K562 (cell line): ENCODE measurements at regions of chr6 and their contacts with region 1.

Region 1: GRCh38 chr6:43506667-43507471 is 3.3 kb downstream of the LRRC73 start:
- DNase-seq: peak; percentile 82 to 94 (median 84)
- ATAC-seq: peak; percentile 87
- H3K4me3 ChIP-seq: no peak overlapping the region
- H3K27ac ChIP-seq: no peak overlapping the region
- H3K4me1 ChIP-seq: peaks cover 10 to 45% of the 10 kb centered on the region in 2 experiments; a peak in 4 of 5 replicates
- H3K27me3 ChIP-seq: peaks cover 0 to 6% of the 10 kb centered on the region in 2 experiments; a peak in 2 of 5 replicates
- CTCF ChIP-seq: peak; percentile 98
- EP300 ChIP-seq: no peak
- POLR2A ChIP-seq: no peak; the same call in 1 of the 2 replicates
- RAD21 ChIP-seq: peak; percentile 85 to 91

Region 2: GRCh38 chr6:42911171-42912021 is 595.5 kb before region 1 on chr6:
- CTCF ChIA-PET with region 1: no interaction called
- POLR2A ChIA-PET with region 1: no interaction called
- in situ Hi-C with region 1: loop called (anchors 5 kb)
- intact Hi-C with region 1: no loop called
- DNase-seq: no peak
- ATAC-seq: no peak
- H3K4me3 ChIP-seq: no peak overlapping the region
- H3K27ac ChIP-seq: no peak overlapping the region
- H3K4me1 ChIP-seq: peaks cover 5 to 13% of the 10 kb centered on the region in 2 experiments; a peak in 4 of 5 replicates
- H3K27me3 ChIP-seq: no peaks in the 10 kb centered on the region
- CTCF ChIP-seq: no peak
- EP300 ChIP-seq: no peak
- POLR2A ChIP-seq: no peak
- RAD21 ChIP-seq: no peak

Region 3: GRCh38 chr6:43263314-43264178 is 243.3 kb before region 1 on chr6:
- CTCF ChIA-PET with region 1: interaction called, 4 read pairs
- POLR2A ChIA-PET with region 1: interaction called, 7 read pairs
- in situ Hi-C with region 1: no loop called
- intact Hi-C with region 1: loop called (anchors 1 kb)
- DNase-seq: peak; percentile 79 to 89 (median 83)
- ATAC-seq: peak; percentile 94
- H3K4me3 ChIP-seq: no peak overlapping the region
- H3K27ac ChIP-seq: no peak overlapping the region
- H3K4me1 ChIP-seq: peaks cover 16 to 40% of the 10 kb centered on the region in 2 experiments
- H3K27me3 ChIP-seq: peaks cover 5 to 15% of the 10 kb centered on the region in 2 experiments; a peak in 3 of 5 replicates
- CTCF ChIP-seq: peak; percentile 94 to 98 (median 96)
- EP300 ChIP-seq: no peak
- POLR2A ChIP-seq: no peak
- RAD21 ChIP-seq: peak; percentile 94 to 97

Region 4: DNA sequence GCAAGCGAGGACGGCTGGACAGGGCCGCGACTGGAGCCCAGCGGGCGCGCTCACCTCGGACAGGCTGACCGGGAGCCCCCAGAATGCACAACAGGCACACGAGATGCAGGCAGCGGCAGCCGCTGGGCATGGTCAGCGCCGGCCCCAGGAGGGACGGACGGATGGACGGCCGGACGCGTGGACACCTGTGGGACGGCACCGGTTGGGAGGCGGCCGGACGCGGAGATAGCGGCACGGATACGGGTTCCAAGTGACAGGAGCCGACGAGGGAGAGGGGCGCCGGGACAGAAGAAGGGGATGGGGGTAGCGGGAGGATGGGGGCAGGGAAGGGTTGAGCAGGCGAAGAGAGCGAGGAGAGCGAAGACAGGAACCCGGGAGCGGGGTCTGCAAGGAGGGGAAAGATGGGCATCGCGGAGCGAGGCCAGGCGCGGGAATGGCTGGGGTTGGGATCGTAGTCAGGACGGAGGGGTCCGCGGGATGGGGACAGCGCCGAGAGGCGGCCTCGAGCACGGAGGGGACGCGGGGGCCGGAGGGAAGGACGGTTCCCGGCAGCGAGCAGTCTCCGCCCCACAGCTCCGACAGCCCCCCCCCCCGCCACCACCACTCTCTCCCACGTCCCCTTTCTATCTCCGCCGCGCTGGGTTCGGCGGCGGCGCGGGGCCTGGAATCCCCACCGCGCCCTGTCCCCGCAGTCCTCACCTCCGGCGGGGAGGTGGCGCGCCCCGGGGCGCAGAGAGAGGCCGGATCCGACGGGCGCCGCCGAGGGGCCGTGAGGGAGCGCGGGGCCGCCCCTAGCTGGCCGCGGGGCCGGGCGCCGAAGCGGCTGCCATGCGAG is 52.0 kb before region 1 on chr6:
- CTCF ChIA-PET with region 1: interaction called, 13 read pairs
- POLR2A ChIA-PET with region 1: interaction called, 3 read pairs
- in situ Hi-C with region 1: no loop called
- intact Hi-C with region 1: loop called (anchors 2 kb)
- DNase-seq: peak; percentile 89 to 90 (median 90)
- ATAC-seq: peak; percentile 96
- H3K4me3 ChIP-seq: peak overlapping the region; percentile 53
- H3K27ac ChIP-seq: no peak overlapping the region
- H3K4me1 ChIP-seq: peaks cover 0 to 18% of the 10 kb centered on the region in 2 experiments; a peak in 4 of 5 replicates
- H3K27me3 ChIP-seq: no peaks in the 10 kb centered on the region; a peak in 1 of 5 replicates
- CTCF ChIP-seq: no peak; a peak in 1 of 6 replicates
- EP300 ChIP-seq: no peak
- POLR2A ChIP-seq: 0 out of 2 replicates have a peak, but pooled peaks have one; percentile 24
- RAD21 ChIP-seq: no peak; a peak in 1 of 4 replicates

Region 5: DNA sequence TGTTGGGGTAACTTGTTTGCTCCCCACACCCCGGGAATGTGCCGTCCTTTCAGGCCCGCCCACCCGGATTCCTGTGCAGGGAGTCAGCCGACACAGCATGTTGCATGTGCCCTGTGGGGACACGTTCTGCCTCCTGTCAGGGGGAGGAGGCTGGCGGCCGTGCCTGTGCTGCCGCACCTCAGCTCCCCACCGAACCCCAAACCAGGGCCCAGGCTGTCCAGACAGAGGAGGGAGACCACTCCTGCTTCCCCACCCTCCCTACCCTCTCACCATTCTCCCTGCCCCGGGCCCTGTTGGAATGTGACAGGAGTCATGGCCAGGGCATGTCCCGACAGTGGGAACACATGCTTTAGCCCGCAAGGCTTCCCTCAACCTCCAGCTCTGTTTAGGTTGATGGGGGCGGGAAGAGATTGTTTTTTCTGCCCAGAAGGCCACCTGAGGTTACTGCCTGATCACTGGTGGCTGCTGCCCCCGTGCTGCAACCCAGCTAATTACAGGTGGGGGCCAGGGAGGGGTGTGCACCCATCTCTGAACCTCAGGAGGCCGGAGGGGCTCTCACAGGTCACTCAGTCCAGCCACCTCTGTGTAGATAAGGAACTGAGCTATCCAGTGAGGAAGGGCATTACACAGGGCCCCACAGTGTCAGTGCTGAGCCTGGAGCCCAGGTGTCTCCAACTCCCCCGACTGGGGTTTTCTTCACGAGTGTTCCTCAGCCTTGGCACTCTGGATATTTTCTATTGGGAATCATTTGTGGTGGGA is 10.3 kb before region 1 on chr6:
- CTCF ChIA-PET with region 1: interaction called, 4 read pairs
- POLR2A ChIA-PET with region 1: interaction called, 54 read pairs
- in situ Hi-C with region 1: no loop called
- intact Hi-C with region 1: no loop called
- DNase-seq: peak; percentile 77 to 89 (median 86)
- ATAC-seq: peak; percentile 91
- H3K4me3 ChIP-seq: no peak overlapping the region
- H3K27ac ChIP-seq: no peak overlapping the region
- H3K4me1 ChIP-seq: peaks cover 16 to 28% of the 10 kb centered on the region in 2 experiments
- H3K27me3 ChIP-seq: no peaks in the 10 kb centered on the region
- CTCF ChIP-seq: peak; percentile 90 to 94 (median 94)
- EP300 ChIP-seq: no peak
- POLR2A ChIP-seq: no peak
- RAD21 ChIP-seq: peak; percentile 66 to 84

Region 6: DNA sequence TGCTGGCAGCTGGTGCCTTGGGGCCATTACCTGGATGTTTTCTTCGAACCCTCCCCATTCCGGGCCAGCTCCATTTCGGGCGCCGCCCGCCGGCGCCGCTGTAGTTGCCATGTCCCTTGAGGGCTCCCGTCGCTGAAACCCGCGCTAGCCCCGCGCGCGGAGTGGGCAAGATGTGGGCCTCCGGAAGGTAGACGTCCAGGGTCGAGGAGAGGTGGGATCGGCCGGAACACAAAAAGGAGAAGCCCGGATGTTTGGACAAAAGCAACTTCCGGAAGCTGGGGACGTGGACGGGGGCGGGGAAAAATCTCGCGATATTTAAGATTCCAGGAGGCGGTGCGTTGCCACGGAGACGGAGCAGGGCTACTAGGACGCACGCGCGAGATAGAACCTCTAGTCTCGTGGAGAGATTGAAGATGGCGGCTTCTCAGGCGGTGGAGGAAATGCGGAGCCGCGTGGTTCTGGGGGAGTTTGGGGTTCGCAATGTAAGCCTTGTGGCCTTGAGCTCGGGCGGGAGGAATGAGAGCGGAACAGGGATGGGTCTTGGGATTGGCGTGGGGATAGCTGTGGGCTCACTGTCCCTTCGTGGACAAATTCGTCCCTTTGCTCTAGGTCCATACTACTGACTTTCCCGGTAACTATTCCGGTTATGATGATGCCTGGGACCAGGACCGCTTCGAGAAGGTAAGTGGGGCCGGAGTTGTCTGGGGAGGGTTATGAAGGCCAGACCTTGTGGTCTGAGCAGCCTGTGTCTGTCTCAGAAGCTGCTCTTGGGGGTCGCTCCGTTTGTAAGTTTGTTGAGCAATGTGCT is 10.0 kb after region 1 on chr6 and contains the starts of genes POLR1C and YIPF3:
- CTCF ChIA-PET with region 1: no interaction called
- POLR2A ChIA-PET with region 1: interaction called, 18 read pairs
- in situ Hi-C with region 1: no loop called
- intact Hi-C with region 1: no loop called
- DNase-seq: peak; percentile 98 to 100 (median 99)
- ATAC-seq: peak; percentile 90
- H3K4me3 ChIP-seq: peak within 1 kb of the TSS; percentile 80
- H3K27ac ChIP-seq: peak within 1 kb of the TSS; percentile 91
- H3K4me1 ChIP-seq: peaks cover 10 to 19% of the 10 kb centered on the region in 2 experiments; a peak in 3 of 5 replicates
- H3K27me3 ChIP-seq: no peaks in the 10 kb centered on the region
- CTCF ChIP-seq: peak in 2 of 3 experiments; percentile 9 to 26; a peak in 2 of 6 replicates
- EP300 ChIP-seq: peak; percentile 38; the same call in 1 of the 2 replicates
- POLR2A ChIP-seq: peak; percentile 99
- RAD21 ChIP-seq: no peak
- polyA plus RNA-seq, gene POLR1C: 405 to 429 TPM
- polyA plus RNA-seq, gene YIPF3: 40.4 to 48.6 TPM

Region 7: DNA sequence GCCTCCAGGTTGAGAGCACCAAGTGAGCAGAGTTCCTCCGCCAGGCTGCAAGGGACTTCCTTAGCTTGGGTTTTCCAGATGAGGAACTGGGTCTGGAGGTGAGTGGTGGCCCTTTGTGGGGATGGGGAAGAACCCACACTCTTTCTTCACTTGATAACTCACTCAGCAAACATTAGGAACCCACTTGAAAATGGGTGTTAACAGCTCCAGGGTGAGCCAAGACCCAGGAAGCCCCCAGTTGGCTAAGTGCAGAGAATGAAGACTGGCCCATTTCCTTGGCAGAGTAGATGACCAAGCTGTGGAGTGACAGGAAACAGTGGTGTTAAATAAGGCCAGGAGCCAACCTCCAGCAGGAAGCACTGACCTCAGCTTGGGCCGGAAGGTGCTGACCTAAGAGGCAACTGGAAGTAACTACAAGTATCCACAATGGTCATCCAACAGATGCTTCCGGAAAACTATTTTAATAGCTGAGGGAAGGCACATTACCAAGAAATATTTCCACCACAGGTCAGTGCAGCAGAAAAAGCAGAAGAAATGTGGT is 597.7 kb after region 1 on chr6:
- CTCF ChIA-PET with region 1: no interaction called
- POLR2A ChIA-PET with region 1: no interaction called
- in situ Hi-C with region 1: no loop called
- intact Hi-C with region 1: no loop called
- DNase-seq: no peak
- ATAC-seq: no peak
- H3K4me3 ChIP-seq: no peak overlapping the region
- H3K27ac ChIP-seq: no peak overlapping the region
- H3K4me1 ChIP-seq: peaks cover 0 to 6% of the 10 kb centered on the region in 2 experiments; a peak in 2 of 5 replicates
- H3K27me3 ChIP-seq: no peaks in the 10 kb centered on the region
- CTCF ChIP-seq: no peak
- EP300 ChIP-seq: no peak
- POLR2A ChIP-seq: no peak
- RAD21 ChIP-seq: no peak